OCI-LY7 (cell line): ENCODE measurements at regions of chr19 and their contacts with region 1.

Region 1: DNA sequence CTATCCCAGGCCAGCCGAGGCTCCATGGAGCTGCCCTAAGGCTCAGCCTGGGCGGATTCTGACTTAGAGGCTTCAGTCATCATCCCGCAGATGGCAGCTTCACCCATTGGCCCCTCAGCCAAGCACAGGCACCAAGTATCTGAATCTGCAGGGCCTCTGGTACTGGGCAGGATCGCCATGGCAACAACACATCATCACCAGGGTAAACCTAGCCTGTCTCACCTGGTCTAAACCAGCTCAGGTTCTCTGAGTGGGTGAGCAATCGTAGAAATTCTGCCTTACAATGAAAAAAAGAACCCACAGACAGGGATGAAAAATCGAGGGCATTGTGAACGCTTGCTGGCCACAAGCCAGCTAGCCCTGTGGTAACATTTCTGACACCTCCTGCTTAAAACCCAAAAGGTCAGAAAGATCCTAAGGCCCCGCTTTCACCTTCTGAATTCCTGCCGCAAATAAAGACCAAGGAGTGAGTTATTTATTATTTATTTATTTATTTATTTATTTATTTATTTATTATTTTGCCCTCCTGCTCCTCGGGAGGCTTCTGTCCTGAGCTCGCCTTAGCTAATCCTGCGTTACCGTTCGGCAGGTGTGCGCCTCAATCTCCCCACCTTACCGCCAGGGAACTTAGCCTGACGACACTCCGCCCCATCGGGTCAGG is 12.0 kb upstream of the CEACAM21 start:
- DNase-seq: no peak
- H3K4me3 ChIP-seq: no peak overlapping the region
- H3K27ac ChIP-seq: no peak overlapping the region
- H3K4me1 ChIP-seq: peaks cover 37% of the 10 kb centered on the region
- CTCF ChIP-seq: no peak

Region 2: GRCh38 chr19:41515015-41515652 is 48.9 kb before region 1 on chr19:
- CTCF ChIA-PET with region 1: no interaction called
- POLR2A ChIA-PET with region 1: no interaction called
- intact Hi-C with region 1: loop called (anchors 1 kb)
- DNase-seq: no peak
- H3K4me3 ChIP-seq: no peak overlapping the region
- H3K27ac ChIP-seq: no peak overlapping the region
- H3K4me1 ChIP-seq: peaks cover 14% of the 10 kb centered on the region
- CTCF ChIP-seq: no peak

Region 3: GRCh38 chr19:41541990-41542584 is 21.9 kb before region 1 on chr19:
- CTCF ChIA-PET with region 1: interaction called, 4 read pairs
- POLR2A ChIA-PET with region 1: interaction called, 5 read pairs
- intact Hi-C with region 1: loop called (anchors 1 kb)
- DNase-seq: peak; percentile 81
- H3K4me3 ChIP-seq: no peak overlapping the region
- H3K27ac ChIP-seq: no peak overlapping the region
- H3K4me1 ChIP-seq: peaks cover 64% of the 10 kb centered on the region
- CTCF ChIP-seq: peak; percentile 90

Region 4: DNA sequence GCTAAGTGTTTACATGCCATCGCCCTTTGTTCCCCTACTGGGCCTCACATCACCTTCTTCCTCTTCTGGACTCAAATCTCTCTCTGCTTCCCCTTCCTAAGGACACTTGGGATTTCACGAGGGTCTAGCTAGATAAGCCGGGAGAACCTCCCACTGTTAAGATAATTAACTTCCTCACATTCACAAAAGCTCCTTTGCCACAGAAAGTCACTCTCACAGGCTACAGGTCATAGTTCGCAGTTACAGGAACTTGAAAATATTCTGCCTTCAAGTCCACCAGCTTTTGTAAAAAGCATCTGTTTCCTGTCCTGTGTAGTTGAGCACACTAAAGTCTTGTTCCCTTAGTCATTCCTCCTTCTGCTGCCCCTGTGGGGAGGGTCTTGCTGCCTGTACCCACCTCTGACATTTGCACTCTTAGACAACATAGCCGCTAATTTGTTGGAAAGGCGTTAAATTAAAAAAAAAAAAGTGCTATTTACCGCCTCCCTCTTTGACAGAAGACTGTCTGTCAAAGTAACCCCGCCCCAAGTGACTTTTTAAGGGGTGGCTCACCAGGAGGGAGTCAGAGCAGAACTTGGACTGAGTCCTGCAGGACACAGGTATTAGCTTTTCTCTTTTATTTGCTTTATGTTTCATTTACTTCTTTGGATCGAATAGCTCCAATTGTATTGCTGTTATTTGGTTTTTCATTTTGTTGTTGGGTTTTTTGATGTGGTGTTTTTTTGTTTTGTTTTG is 14.9 kb before region 1 on chr19:
- CTCF ChIA-PET with region 1: interaction called, 4 read pairs
- POLR2A ChIA-PET with region 1: interaction called, 11 read pairs
- intact Hi-C with region 1: no loop called
- DNase-seq: peak; percentile 95
- H3K4me3 ChIP-seq: peak overlapping the region; percentile 84
- H3K27ac ChIP-seq: peak overlapping the region; percentile 99
- H3K4me1 ChIP-seq: peaks cover 71% of the 10 kb centered on the region
- CTCF ChIP-seq: no peak